ENCODE measurements at regions of chr2 and their contacts with region 1.

Region 1: DNA sequence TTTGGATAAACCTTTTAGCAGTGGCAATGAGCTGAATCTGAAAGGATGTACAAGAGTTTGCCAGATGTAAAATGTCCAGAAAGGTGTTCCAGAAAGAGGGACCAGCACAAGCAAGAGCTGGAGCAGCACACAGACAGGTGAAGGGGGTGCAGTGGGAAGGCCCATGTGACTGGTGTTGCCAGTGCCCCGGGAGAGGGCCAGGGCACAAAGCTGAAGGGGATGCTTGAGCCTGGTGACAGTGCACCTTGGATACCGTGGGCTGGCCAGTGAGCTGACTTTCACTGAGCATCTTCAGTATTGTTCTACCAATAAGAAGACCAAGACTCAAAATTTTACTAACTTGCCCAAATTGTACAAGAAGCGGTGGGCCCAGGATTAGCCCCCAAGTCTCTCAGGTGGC is 132.3 kb upstream of the ALPP start:
- DNase-seq: no peak

Region 2: GRCh38 chr2:232292395-232293154 is 46.3 kb after region 1 on chr2:
- intact Hi-C with region 1: loop called in 1 of 2 experiments (anchors 1 kb)
- DNase-seq: no peak